CD4-positive, alpha-beta memory T cell (primary cell): ENCODE measurements at regions of chr12 and their contacts with region 1.

Region 1: DNA sequence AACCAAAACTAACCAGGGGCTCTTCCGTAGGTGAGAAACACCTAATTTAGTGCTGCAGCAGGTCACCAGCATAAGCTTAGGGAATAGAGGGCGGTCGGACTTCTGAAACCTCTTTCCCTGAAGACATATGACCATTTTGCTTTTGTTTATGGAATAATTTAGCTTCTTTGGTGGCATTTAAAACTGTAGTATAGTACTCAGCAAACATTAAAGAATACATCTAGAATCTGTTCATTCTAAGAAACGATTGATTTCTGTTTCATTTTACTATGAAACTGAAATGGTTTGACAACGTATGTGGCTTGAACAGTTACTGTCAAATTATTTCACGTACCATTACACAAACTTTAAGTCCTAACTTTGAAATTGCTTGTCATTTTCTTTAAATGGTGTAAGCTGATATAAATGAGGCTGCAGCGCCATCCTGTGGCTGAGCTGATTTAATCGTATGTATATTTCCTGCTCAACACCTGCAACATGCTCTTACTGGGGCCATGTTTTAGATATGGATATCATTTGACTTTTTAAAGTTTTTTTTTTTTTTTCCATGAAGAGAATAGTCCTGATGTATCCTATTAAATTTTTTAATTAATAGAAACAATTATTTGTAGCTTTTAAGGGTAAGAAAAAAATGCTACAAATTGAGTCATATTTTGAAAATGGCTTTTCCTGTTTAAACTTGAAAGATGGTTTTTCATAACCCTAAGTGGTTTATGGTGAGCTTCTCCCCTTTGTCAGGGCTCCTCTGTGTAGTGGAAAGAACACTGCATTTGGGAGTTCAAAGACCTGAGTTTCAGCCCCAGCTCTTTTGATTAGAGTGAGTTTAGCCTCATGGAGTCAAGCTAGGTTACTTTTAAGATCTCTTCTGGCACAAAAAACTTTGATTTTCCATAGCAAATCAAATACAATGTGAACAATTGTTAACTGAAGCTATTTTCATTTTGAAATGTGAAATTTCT is 27.4 kb downstream of the CFAP54 start:
- DNase-seq: peak; percentile 80 to 84 (median 81)
- H3K4me3 ChIP-seq: peak overlapping the region in 1 of 2 donors; percentile 38
- H3K4me3 Mint-ChIP-seq: peak overlapping the region in 7 of 8 donors; percentile 12 to 80 (median 43)
- H3K27ac ChIP-seq: no peak overlapping the region
- H3K27ac Mint-ChIP-seq: peak overlapping the region; percentile 22 to 87 (median 67)
- H3K4me1 ChIP-seq: peaks cover 7% of the 10 kb centered on the region
- H3K4me1 Mint-ChIP-seq: peaks cover 5 to 11% (median 6%) of the 10 kb centered on the region in 4 donors
- H3K27me3 ChIP-seq: no peaks in the 10 kb centered on the region
- H3K27me3 Mint-ChIP-seq: no peaks in the 10 kb centered on the region

Region 2: DNA sequence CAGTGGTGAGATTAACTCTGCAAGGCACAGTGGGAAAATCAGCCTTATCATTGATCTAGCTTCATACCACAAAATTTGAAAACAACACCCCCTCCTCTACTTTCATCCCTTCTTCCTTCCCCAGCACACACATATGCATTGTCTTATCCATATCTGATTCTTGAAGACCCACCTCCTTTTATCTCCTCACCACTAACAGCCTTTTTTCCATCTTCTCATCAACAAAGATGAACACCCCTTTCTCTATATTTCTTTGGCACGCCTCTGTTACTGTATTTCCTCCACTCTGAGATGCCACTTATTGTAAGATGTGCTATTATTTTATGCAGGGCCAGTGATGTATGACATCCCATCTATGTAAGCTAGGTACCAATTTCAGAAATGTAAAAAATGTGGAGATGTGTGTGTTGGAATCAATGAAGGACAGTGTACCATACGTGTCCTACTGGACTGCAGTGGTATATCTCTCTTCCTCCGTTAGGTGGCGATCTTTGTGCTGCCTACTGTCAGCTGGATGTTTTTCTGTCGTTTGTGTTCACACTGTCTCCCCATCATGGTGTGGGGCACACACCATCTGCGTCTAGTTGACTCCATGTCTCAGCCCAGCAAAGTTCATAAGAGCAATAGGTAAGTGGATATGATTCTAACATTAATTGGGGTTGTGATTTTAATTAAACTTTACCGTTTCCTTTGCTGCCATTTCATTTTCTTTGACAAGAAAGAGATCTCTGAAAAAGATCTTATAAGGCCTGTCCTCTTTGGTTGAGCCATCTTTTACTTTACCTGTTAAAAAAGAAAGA is 598.4 kb before region 1 on chr12:
- CTCF ChIA-PET with region 1: interaction called, 6 read pairs
- POLR2A ChIA-PET with region 1: no interaction called
- intact Hi-C with region 1: loop called (anchors 2 kb)
- DNase-seq: peak; percentile 44 to 61 (median 57)
- H3K4me3 ChIP-seq: no peak overlapping the region
- H3K4me3 Mint-ChIP-seq: no peak overlapping the region
- H3K27ac ChIP-seq: no peak overlapping the region
- H3K27ac Mint-ChIP-seq: no peak overlapping the region
- H3K4me1 ChIP-seq: no peaks in the 10 kb centered on the region
- H3K4me1 Mint-ChIP-seq: no peaks in the 10 kb centered on the region
- H3K27me3 ChIP-seq: no peaks in the 10 kb centered on the region
- H3K27me3 Mint-ChIP-seq: no peaks in the 10 kb centered on the region

Region 3: GRCh38 chr12:96194971-96195844 is 321.5 kb before region 1 on chr12:
- CTCF ChIA-PET with region 1: no interaction called
- POLR2A ChIA-PET with region 1: interaction called, 5 read pairs
- intact Hi-C with region 1: loop called (anchors 5 kb)
- DNase-seq: peak; percentile 72 to 94 (median 76)
- H3K4me3 ChIP-seq: peak overlapping the region; percentile 85 to 90
- H3K4me3 Mint-ChIP-seq: peak overlapping the region; percentile 93 to 100 (median 98)
- H3K27ac ChIP-seq: peak overlapping the region; percentile 95
- H3K27ac Mint-ChIP-seq: peak overlapping the region; percentile 96 to 100 (median 97)
- H3K4me1 ChIP-seq: peaks cover 52% of the 10 kb centered on the region
- H3K4me1 Mint-ChIP-seq: peaks cover 34 to 62% (median 42%) of the 10 kb centered on the region in 4 donors
- H3K27me3 ChIP-seq: no peaks in the 10 kb centered on the region
- H3K27me3 Mint-ChIP-seq: no peaks in the 10 kb centered on the region

Region 4: GRCh38 chr12:96219698-96220206 is 297.0 kb before region 1 on chr12:
- CTCF ChIA-PET with region 1: interaction called, 134 read pairs
- POLR2A ChIA-PET with region 1: interaction called, 13 read pairs
- intact Hi-C with region 1: loop called (anchors 1 kb)
- DNase-seq: no peak
- H3K4me3 ChIP-seq: no peak overlapping the region
- H3K4me3 Mint-ChIP-seq: peak overlapping the region in 2 of 8 donors; percentile 16 to 51
- H3K27ac ChIP-seq: no peak overlapping the region
- H3K27ac Mint-ChIP-seq: peak overlapping the region; percentile 50 to 78 (median 68)
- H3K4me1 ChIP-seq: peaks cover 37% of the 10 kb centered on the region
- H3K4me1 Mint-ChIP-seq: peaks cover 37 to 73% (median 51%) of the 10 kb centered on the region in 4 donors
- H3K27me3 ChIP-seq: no peaks in the 10 kb centered on the region
- H3K27me3 Mint-ChIP-seq: no peaks in the 10 kb centered on the region

Region 5: DNA sequence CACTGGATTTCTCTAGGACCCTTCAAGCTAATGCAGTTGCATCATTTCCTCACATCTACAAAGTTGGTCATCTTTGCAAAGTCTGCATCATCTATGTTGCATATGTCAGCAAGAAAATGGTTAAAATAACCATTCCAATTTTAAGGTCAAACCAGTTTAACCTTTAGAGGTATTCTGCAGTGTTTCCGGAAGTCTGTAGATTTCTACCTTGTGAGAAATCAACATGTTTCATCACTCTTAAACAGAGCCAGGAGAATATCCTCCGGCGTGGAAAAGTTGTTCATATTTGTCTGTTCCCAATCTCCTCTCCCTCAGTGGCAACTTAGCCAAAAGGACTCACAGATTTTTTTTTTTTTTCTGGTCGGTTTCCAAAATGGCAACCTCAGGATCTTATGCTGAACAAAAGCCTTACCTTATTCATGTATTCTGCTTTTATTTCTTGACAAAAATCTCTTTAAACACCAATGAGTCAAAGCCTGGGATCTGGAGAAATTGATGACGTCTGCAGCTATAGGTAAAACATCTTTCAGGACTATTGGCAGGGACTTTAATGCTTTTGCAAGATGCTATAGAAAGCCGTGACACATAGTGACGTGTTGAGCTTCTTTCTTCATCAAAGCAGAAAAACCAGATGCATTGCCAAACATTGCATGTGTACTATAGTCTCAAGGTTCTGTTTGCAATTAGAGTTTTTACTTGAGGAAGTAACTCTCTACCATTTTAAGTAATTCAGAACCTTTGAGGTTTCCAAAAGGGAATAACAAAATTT is 100.5 kb before region 1 on chr12:
- CTCF ChIA-PET with region 1: interaction called, 8 read pairs
- POLR2A ChIA-PET with region 1: no interaction called
- intact Hi-C with region 1: loop called (anchors 1 kb)
- DNase-seq: no peak
- H3K4me3 ChIP-seq: no peak overlapping the region
- H3K4me3 Mint-ChIP-seq: no peak overlapping the region
- H3K27ac ChIP-seq: no peak overlapping the region
- H3K27ac Mint-ChIP-seq: peak overlapping the region in 1 of 7 donors; percentile 48
- H3K4me1 ChIP-seq: peaks cover 17% of the 10 kb centered on the region
- H3K4me1 Mint-ChIP-seq: peaks cover 7 to 31% (median 13%) of the 10 kb centered on the region in 4 donors
- H3K27me3 ChIP-seq: no peaks in the 10 kb centered on the region
- H3K27me3 Mint-ChIP-seq: no peaks in the 10 kb centered on the region

Region 6: DNA sequence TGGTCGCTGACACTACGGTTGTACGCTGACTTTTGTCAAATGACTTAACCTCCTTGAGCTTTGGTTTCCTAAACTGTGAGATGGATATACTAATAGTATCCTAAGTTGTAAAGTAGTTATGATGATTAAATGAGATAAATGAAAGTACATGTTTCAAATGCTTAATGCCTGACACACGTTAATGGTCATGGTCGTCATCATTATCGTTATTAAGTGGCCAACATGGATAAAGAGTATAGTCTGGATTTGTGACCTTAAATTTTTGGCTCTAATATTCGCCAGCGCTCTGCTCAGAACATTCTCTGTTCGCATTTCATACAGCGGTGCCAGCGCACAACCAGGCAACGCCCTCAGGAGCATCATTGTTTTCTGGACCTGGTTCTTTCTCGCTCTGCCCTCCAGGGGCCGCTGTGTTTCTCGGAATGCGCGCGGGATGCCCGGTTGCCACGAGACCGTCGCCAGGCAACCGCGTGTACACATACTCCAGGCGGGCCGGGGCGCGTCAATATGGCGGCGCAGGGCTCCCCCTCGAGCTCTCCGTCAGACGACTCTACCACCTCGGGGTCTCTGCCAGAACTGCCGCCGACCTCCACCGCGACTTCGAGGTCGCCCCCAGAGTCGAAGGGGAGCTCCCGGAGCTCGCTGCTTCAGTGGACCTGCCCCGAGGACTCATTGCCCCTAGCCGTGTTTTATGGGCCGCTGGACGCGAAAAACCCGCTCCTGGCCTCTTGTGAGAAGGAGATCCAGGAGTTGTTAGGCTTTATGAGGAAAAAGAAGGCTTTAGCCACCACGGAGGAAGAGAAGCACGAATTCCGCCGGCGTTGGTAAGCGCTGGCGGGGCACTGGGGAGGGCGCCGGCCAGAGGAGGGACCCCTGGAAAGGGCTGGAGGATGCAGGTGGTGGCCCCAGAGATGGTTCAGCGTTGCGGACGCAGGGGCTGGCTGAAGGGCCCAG is 27.4 kb before region 1 on chr12 and contains the start of gene CFAP54:
- CTCF ChIA-PET with region 1: interaction called, 180 read pairs
- POLR2A ChIA-PET with region 1: interaction called, 35 read pairs
- intact Hi-C with region 1: loop called (anchors 1 kb)
- DNase-seq: peak; percentile 94 to 96 (median 95)
- H3K4me3 ChIP-seq: peak within 1 kb of the TSS; percentile 64 to 84
- H3K4me3 Mint-ChIP-seq: peak within 1 kb of the TSS; percentile 84 to 93 (median 92)
- H3K27ac ChIP-seq: peak within 1 kb of the TSS; percentile 62
- H3K27ac Mint-ChIP-seq: peak within 1 kb of the TSS; percentile 86 to 98 (median 97)
- H3K4me1 ChIP-seq: peaks cover 22% of the 10 kb centered on the region
- H3K4me1 Mint-ChIP-seq: peaks cover 19 to 31% (median 23%) of the 10 kb centered on the region in 4 donors
- H3K27me3 ChIP-seq: no peaks in the 10 kb centered on the region
- H3K27me3 Mint-ChIP-seq: no peaks in the 10 kb centered on the region
- total RNA-seq, gene CFAP54: 0.73 to 1.1 TPM

Region 7: GRCh38 chr12:96501139-96501761 is 15.5 kb before region 1 on chr12:
- CTCF ChIA-PET with region 1: interaction called, 43 read pairs
- POLR2A ChIA-PET with region 1: interaction called, 6 read pairs
- intact Hi-C with region 1: no loop called
- DNase-seq: peak in 4 of 5 donors; percentile 29 to 65 (median 37)
- H3K4me3 ChIP-seq: peak overlapping the region in 1 of 2 donors; percentile 17
- H3K4me3 Mint-ChIP-seq: peak overlapping the region in 7 of 8 donors; percentile 35 to 74 (median 53)
- H3K27ac ChIP-seq: peak overlapping the region; percentile 18
- H3K27ac Mint-ChIP-seq: peak overlapping the region; percentile 79 to 98 (median 89)
- H3K4me1 ChIP-seq: peaks cover 46% of the 10 kb centered on the region
- H3K4me1 Mint-ChIP-seq: peaks cover 44 to 63% (median 54%) of the 10 kb centered on the region in 4 donors
- H3K27me3 ChIP-seq: no peaks in the 10 kb centered on the region
- H3K27me3 Mint-ChIP-seq: no peaks in the 10 kb centered on the region